ENCODE measurements at regions of chr20 and their contacts with region 1.

Region 1: GRCh38 chr20:21505161-21505809 is 8.6 kb downstream of the NKX2-2 start:
- DNase-seq: peak; percentile 74 to 89
- H3K4me3 ChIP-seq: peak overlapping the region; percentile 62
- H3K4me3 Mint-ChIP-seq: peak overlapping the region; percentile 47
- H3K27ac Mint-ChIP-seq: no peak overlapping the region
- H3K4me1 ChIP-seq: peaks cover 13% of the 10 kb centered on the region
- H3K4me1 Mint-ChIP-seq: no peaks in the 10 kb centered on the region
- H3K27me3 ChIP-seq: no peaks in the 10 kb centered on the region
- H3K27me3 Mint-ChIP-seq: peaks cover 3% of the 10 kb centered on the region
- CTCF ChIP-seq: peak; percentile 98 to 99

Region 2: GRCh38 chr20:21235484-21236445 is 269.5 kb before region 1 on chr20:
- CTCF ChIA-PET with region 1: interaction called, 34 read pairs
- POLR2A ChIA-PET with region 1: no interaction called
- intact Hi-C with region 1: loop called (anchors 1 kb)
- DNase-seq: peak; percentile 60 to 75
- H3K4me3 ChIP-seq: no peak overlapping the region
- H3K4me3 Mint-ChIP-seq: no peak overlapping the region
- H3K27ac Mint-ChIP-seq: no peak overlapping the region
- H3K4me1 ChIP-seq: no peaks in the 10 kb centered on the region
- H3K4me1 Mint-ChIP-seq: no peaks in the 10 kb centered on the region
- H3K27me3 ChIP-seq: no peaks in the 10 kb centered on the region
- H3K27me3 Mint-ChIP-seq: no peaks in the 10 kb centered on the region
- CTCF ChIP-seq: peak; percentile 70 to 87

Measured in Caco-2 (cell line).